ENCODE measurements at regions of chr20 and their contacts with region 1.

Region 1: GRCh38 chr20:21235484-21236445 is 67.4 kb upstream of the XRN2 start:
- DNase-seq: peak; percentile 59
- CTCF ChIP-seq: peak; percentile 91

Region 2: DNA sequence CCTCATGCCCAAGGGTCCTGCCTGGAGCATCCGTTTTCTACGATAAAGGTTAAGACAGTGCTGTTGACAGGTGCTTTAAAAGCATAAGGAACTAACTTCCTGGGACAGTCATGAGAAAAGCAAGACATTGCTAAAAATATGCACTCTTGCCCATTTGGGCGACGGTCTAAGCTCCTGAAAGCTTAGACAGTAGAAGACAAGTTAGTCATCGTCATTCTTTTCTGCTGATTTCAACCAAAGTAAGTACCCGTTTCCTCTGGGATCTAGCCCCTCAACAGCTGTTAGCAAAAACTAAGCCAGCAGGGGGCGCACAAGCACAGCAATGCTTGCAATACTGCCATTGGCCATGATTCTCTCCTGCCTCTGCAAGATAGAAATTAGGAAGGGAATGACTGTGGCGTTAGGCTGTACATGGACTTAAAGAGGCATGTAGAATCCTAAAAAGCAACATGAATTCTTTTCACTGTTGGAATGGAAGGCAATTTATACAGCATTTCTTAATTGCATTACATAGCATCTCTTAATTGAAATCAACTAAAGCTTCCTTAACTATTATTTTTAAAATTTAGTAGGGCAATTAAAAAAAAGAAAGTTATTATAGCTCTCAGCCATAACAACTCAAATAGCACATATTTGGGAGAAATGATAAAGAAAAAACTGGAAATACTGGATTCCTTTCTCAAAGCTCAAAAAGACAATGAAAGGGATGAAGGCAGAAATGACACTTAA is 375.5 kb before region 1 on chr20:
- CTCF ChIA-PET with region 1: interaction called, 13 read pairs
- POLR2A ChIA-PET with region 1: no interaction called
- DNase-seq: peak; percentile 76
- CTCF ChIP-seq: peak; percentile 90

Region 3: GRCh38 chr20:20979934-20980333 is 255.8 kb before region 1 on chr20:
- CTCF ChIA-PET with region 1: no interaction called
- POLR2A ChIA-PET with region 1: no interaction called
- DNase-seq: no peak
- CTCF ChIP-seq: no peak

Region 4: GRCh38 chr20:21219686-21220085 is 16.1 kb before region 1 on chr20:
- CTCF ChIA-PET with region 1: interaction called, 24 read pairs
- POLR2A ChIA-PET with region 1: no interaction called
- DNase-seq: no peak
- CTCF ChIP-seq: no peak

Region 5: DNA sequence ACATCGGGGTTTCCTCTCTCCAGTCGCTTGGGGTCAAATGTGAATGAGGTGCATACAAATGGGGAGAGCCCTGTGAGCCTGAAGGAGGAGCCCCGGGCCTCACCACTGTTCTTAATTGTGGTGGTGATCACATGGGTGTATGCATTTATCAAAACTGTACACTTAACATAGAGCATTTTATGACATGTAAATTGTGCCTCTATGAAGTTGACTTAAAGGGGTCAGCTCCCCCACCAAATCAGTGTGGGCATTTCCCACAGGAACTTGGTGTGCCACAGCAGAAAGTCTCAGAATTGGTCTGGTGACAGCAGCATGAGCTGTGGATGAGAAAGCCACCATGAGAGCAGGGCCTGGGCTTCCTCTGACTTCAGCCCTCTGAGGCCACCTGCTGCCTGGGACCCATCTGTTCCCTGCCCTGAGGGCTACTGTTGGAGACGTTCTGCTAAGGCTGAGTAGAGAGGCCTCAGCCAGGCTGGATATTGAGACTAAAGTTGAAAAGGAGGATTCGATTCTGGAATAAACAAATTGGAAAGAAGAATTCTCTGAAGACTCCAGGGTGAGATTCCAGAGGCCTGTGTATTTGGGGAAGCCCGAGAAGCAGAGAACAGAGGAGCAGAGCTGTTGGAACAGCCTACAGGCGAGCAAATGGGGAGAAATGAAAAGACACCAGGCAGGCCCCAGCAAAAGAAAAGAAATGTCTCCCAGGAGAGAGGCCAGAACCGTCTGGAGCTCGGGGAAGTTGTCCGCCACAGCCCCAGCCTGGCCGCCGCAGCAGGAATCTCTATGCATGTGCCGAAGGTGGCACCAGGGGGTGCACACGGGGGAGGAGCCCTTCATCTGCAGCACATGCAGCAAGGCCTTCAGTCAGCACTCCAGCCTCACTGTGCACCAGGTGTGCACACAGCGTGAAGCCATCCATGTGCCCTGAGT is 29.8 kb after region 1 on chr20:
- CTCF ChIA-PET with region 1: interaction called, 22 read pairs
- POLR2A ChIA-PET with region 1: no interaction called
- DNase-seq: no peak
- CTCF ChIP-seq: no peak

Region 6: DNA sequence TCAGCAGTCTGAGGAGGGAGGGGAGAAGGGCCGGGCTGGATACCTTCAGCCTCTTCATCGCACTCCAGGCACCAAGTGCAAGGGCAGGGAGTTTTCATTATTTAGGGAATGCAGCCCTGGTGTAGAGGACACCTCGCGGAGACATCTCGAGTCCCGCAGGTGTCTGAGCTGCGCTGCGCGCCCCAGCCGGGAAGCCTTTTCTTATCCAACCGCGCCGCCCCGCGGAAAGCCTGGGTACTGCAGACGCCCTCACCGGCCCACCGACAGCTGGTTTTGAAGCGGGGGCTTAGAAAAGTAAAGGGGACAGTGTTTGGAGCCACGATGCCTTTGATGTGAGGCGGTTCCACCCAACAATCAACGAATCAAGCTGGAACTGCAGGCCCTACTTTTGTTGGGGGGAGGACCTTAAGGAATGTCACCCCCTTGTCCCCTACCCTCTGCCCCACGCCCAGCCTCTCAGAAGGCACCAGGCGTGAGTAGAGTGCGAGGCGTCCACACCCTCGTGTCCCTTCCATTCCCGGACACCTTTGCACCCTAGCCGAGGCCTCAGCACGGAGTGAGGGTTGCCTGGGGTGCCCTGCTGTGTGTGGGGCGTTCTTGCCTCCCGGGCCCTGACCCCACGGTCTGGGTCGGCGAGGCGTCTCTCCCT is 269.5 kb after region 1 on chr20:
- CTCF ChIA-PET with region 1: interaction called, 293 read pairs
- POLR2A ChIA-PET with region 1: no interaction called
- DNase-seq: peak; percentile 83
- CTCF ChIP-seq: peak; percentile 98

Region 7: GRCh38 chr20:21571841-21572690 is 336.3 kb after region 1 on chr20:
- CTCF ChIA-PET with region 1: interaction called, 26 read pairs
- POLR2A ChIA-PET with region 1: no interaction called
- DNase-seq: peak; percentile 34
- CTCF ChIP-seq: peak; percentile 85